Posterior vena cava (tissue), 2 donors: ENCODE measurements at regions of chr2 and their contacts with region 1.

Region 1: GRCh38 chr2:240053173-240054155 is at the start of gene OR6B3:
- DNase-seq: no peak
- total RNA-seq, gene OR6B3: not detected

Region 2: GRCh38 chr2:239569401-239570090 is 483.9 kb before region 1 on chr2:
- intact Hi-C with region 1: no loop called
- DNase-seq: peak; percentile 59

Region 3: DNA sequence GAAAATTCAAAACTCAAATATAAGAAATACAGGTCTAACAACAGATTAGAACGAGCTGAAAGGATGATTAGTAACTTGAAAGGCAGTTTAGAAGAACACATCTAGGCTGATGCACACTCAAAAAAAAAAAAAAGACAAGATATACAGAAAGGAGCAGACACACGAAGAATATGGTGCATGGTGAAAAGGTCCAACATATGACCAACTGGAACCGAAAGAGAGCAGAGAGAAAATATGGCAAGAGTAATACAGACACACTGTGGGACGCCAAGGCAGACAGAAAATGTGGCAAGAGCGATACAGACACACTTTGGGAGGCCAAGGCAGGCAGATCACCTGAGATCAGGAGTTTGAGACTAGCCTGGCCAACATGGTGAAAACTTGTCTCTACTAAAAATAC is 68.1 kb before region 1 on chr2:
- intact Hi-C with region 1: loop called in 1 of 2 experiments (anchors 2 kb)
- DNase-seq: no peak

Region 4: DNA sequence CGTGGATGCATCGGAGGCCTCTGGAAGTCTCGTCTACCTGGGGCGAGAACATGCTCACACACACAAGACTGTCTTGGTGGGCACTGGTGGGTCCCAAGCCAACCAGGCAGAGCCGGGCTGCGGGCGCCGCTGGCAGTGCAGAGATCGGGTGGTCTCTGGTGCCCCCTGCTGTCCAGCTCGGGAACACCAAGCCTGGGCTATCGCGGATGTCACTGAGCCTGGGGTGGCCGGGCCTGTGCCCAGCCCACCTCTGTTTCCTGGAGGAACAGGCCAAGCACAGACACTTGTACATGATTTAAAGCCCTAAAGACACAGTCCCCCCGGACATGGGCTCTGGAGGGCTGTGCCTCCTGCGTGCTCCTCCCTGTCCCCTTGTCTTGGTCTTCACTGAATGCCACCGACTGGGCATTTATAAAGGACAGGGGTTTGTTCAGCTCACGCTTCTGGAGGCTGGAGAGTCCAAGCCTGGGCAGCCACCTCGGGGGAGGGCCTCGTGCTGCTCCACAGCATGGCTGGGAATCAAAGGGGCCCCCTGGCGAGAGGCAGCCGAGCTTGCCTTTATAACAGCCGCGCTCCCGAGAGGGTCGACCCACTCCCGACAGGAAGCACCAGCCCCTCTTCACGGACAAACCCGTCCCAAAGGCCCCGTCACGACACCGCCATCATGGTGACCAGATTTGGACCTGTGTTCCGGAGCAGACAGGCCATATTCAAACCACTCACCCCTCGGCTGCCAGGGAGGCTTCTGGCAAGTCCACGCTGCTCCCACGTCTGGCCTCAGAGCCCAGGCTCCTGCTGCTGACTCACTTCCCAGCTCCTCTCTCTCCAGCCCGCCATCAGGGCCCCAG is 90.6 kb after region 1 on chr2:
- intact Hi-C with region 1: loop called (anchors 5 kb)
- DNase-seq: peak; percentile 90

Region 5: DNA sequence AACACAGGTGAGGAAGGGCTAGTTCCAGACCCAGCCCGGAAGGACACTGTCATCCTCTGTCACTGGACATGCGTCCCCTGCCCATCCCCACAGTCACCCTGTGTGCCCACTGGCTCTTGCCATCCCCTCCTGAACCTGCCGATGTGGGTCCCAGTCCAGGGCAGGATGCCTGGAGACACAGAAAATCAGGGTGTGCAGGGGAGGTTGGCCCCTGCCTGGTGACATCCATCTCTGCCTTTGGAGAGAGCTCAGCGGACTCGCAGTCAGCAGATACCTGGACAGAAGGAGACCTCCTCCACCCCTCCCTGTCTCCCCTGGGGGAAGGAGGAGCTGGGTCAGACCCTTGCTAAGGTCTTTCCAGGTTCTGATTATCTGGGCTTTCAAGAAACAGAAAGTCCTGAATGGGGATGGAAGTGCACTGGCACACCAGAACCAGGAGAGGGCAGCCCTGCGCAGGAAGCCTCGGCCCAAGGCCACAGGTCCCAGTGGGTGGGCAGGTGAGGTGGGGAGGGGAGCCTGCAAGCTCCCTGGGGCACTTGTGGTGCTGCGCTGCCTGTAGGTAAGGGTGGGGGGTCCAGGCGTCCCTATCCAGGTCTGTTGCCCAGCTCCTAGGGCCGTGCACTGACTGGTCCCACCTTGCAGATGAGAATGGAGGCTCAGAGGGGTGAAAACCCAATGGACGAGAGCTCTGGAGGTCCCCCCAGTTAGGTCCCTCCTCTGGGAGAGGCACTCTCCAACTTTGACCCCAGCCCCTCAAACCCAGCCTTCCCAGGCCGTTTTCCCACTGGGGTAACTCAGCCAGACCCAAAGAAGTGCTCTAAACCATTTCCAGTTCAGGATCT is 96.7 kb after region 1 on chr2:
- intact Hi-C with region 1: loop called in 1 of 2 experiments (anchors 5 kb)
- DNase-seq: no peak